ENCODE measurements at regions of chr20 and their contacts with region 1.

Region 1: DNA sequence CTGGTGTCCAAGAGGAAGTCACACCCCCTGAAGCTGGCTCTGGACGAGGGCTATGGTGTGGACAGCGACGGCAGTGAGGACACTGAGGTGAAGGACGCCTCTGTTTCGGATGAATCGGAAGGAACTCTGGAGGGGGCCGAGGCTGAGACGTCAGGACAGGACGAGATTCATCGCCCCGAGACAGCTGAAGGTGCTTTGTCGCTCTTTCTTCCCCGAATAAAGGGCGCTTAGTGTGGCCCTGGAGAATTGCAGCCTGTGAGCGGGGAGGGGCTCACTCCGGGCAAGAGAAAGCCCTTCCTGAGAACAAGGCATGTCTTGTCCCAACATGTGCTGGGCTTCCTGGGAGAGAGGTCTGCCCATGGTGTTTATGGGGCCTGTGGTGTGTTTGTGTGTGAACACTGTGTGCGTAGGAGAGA is 41.4 kb downstream of the MYT1 start:
- DNase-seq: no peak
- ATAC-seq: peak; percentile 5; the same call in 1 of the 3 replicates
- H3K4me3 ChIP-seq: no peak overlapping the region
- H3K27ac ChIP-seq: no peak overlapping the region
- H3K4me1 ChIP-seq: peaks cover 29% of the 10 kb centered on the region
- H3K27me3 ChIP-seq: peaks cover 28 to 89% of the 10 kb centered on the region in 2 experiments
- CTCF ChIP-seq: no peak
- EP300 ChIP-seq: no peak
- POLR2A ChIP-seq: no peak
- RAD21 ChIP-seq: no peak

Region 2: GRCh38 chr20:64171211-64171610 is 34.4 kb before region 1 on chr20:
- CTCF ChIA-PET with region 1: no interaction called
- POLR2A ChIA-PET with region 1: no interaction called
- in situ Hi-C with region 1: loop called (anchors 5 kb)
- intact Hi-C with region 1: no loop called
- DNase-seq: no peak
- ATAC-seq: no peak
- H3K4me3 ChIP-seq: no peak overlapping the region
- H3K27ac ChIP-seq: no peak overlapping the region
- H3K4me1 ChIP-seq: peaks cover 11% of the 10 kb centered on the region
- H3K27me3 ChIP-seq: peaks cover 9 to 40% of the 10 kb centered on the region in 2 experiments
- CTCF ChIP-seq: no peak
- EP300 ChIP-seq: no peak
- POLR2A ChIP-seq: no peak
- RAD21 ChIP-seq: no peak

Region 3: DNA sequence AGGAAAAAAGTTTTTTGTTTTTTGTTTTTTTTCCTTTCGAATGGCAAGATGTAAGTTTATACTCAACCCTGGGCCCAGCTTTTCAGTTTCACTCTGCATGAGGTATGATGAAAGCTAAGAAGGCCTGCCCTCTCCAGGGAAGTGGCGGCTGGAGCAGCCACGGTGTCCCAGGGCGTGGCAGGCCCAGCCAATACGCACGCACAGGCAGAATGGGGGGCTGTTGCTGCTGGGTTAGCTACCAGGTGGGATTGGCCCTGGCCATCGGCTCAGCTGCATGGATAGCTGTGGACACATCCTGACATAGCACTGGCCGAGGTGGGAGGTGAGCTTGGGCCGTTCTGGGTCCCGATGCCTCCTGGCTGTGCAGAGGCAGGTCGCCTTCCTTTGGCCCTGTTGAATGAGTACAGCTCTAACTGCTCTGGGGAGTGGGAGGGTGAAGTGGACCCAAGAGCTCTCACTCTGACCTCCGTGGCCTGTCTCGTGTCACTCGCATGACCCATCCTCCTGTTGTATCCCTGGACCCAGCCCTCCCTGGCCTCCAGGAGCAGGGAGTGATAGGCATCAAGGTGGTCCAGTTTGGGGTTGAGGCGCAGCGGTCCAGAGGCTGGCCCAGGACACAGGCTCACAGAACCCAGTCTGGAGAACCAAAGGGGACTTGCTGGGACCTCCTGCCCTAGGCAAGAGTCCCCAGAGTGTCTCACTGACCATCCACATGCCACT is 23.3 kb before region 1 on chr20:
- CTCF ChIA-PET with region 1: no interaction called
- POLR2A ChIA-PET with region 1: no interaction called
- in situ Hi-C with region 1: no loop called
- intact Hi-C with region 1: no loop called
- DNase-seq: no peak
- ATAC-seq: peak; percentile 33
- H3K4me3 ChIP-seq: no peak overlapping the region
- H3K27ac ChIP-seq: no peak overlapping the region
- H3K4me1 ChIP-seq: peaks cover 5% of the 10 kb centered on the region; the same call in 1 of the 2 replicates
- H3K27me3 ChIP-seq: peaks cover 5 to 31% of the 10 kb centered on the region in 2 experiments; a peak in 3 of 5 replicates
- CTCF ChIP-seq: no peak
- EP300 ChIP-seq: no peak
- POLR2A ChIP-seq: no peak
- RAD21 ChIP-seq: no peak

Measured in HepG2 (cell line).